ENCODE measurements at regions of chr14 and their contacts with region 1.

Region 1: GRCh38 chr14:89164168-89165073 is 252.6 kb downstream of the FOXN3 start:
- DNase-seq: no peak
- H3K4me3 ChIP-seq: no peak overlapping the region
- H3K27ac ChIP-seq: no peak overlapping the region
- H3K4me1 ChIP-seq: no peaks in the 10 kb centered on the region
- H3K27me3 ChIP-seq: no peaks in the 10 kb centered on the region
- CTCF ChIP-seq: no peak

Region 2: DNA sequence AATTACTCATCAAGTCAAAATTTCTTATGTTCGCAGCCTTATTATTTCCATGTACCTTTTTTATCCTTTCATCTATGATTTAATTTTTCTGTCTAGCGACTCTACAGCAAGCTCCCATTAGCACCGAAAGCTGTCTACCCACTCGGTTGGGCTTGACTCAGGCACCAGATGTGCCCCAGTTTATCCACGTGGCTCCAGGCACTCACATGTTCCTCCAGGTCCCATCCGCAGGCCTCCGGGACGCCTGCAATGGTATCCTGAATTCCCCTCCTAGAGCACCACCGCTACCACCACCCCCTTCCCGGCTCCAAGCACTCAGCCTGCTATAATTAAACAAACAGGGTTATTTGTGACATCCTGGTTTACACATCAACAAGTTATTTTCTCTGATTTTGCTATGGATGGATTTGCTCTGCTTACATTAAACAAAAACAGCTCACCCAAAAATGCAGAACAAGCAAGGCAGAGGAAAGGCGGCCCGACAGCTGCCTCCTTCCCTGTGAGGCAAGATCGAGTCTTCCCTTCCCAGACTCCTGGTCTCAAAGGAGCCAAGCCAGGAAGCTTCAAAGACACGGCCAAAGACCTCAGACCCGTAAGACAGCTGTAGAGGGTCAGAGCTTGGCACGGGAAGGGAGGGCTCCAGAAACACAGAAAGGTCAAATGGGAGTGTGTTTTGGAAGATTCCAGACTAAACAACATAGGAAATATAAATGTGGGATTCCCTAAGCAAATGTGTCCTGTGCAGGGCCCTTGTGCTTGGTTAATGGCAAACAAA is 86.2 kb before region 1 on chr14:
- CTCF ChIA-PET with region 1: no interaction called
- dilution Hi-C with region 1: loop called (anchors 5 kb)
- in situ Hi-C with region 1: no loop called
- intact Hi-C with region 1: no loop called
- DNase-seq: no peak
- H3K4me3 ChIP-seq: no peak overlapping the region
- H3K27ac ChIP-seq: no peak overlapping the region
- H3K4me1 ChIP-seq: no peaks in the 10 kb centered on the region
- H3K27me3 ChIP-seq: no peaks in the 10 kb centered on the region
- CTCF ChIP-seq: no peak

Region 3: GRCh38 chr14:89198544-89199329 is 34.3 kb after region 1 on chr14:
- CTCF ChIA-PET with region 1: no interaction called
- dilution Hi-C with region 1: no loop called
- in situ Hi-C with region 1: no loop called
- intact Hi-C with region 1: no loop called
- DNase-seq: no peak
- H3K4me3 ChIP-seq: no peak overlapping the region
- H3K27ac ChIP-seq: no peak overlapping the region
- H3K4me1 ChIP-seq: no peaks in the 10 kb centered on the region
- H3K27me3 ChIP-seq: no peaks in the 10 kb centered on the region
- CTCF ChIP-seq: no peak